ENCODE measurements at regions of chr6 and their contacts with region 1.

Region 1: DNA sequence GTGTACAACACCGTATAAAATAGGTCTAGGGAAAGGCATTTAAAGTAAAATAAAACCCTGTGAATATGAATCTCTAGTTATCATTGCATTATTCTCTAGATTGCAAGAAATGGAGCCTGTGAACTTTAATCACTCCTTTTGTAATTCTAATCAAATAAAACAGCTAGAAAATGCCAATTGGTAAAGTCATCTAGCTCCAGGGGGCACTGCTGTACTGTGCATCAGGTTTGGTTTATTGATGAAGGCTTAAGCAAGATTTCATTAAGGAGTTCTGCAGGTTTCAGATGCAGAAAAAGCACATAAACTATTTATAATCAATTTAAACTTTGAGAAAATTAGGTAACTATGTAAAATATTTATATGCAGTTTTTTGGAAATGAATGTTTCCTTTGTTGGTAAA is 645.0 kb downstream of the PHF3 start:
- DNase-seq: no peak
- H3K4me3 ChIP-seq: no peak overlapping the region
- H3K27ac ChIP-seq: no peak overlapping the region
- H3K27me3 ChIP-seq: no peaks in the 10 kb centered on the region
- CTCF ChIP-seq: peak; percentile 59

Region 2: GRCh38 chr6:64732888-64733287 is 452.3 kb after region 1 on chr6:
- in situ Hi-C with region 1: loop called (anchors 25 kb)
- DNase-seq: no peak
- H3K4me3 ChIP-seq: no peak overlapping the region
- H3K27ac ChIP-seq: no peak overlapping the region
- H3K27me3 ChIP-seq: no peaks in the 10 kb centered on the region
- CTCF ChIP-seq: peak; percentile 30

Measured in brain microvascular endothelial cell (primary cell).